Astrocyte of the cerebellum (primary cell): ENCODE measurements at regions of chr12 and their contacts with region 1.

Region 1: DNA sequence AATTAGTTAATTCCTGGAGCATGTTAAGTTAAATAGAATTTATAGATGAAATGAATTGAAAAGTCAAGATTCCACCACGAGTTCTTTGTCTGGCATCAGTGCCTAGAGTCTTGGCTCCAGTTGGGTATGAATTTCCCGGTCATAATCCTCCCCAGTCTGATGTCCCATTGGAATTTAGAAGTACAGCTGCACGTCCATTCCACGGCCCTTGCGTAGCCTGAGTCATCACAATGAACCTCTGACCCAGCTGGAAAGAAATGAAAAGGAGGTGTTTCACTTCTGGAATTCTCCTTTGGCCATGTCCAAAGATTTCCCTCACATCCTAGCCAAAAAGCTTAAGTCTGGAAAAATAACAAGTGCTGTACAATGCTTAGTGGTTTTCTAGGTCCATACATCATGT is 122.7 kb downstream of the KICS2 start:
- DNase-seq: peak; percentile 94
- H3K4me3 ChIP-seq: no peak overlapping the region
- CTCF ChIP-seq: no peak

Region 2: DNA sequence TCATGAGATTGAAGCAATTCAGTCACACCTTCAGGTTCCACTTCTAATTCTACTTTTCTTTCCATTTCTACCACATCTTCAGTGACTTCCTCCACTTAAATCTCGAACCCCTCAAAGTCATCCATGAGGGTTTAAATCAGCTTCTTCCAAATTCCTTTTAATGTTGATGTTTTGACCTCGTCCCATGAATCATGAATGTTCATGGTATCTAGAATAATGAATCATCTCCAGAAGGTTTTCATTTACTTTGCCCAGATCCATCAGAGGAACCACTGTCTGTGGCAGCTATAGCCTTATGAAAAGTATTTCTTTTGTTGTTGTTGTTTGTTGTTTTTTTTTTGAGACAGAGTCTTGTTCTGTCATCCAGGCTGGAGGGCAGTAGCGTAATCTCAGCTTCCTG is 312.1 kb before region 1 on chr12:
- in situ Hi-C with region 1: no loop called
- DNase-seq: no peak
- H3K4me3 ChIP-seq: no peak overlapping the region
- CTCF ChIP-seq: no peak

Region 3: GRCh38 chr12:64137117-64137516 is 37.7 kb after region 1 on chr12:
- in situ Hi-C with region 1: no loop called
- DNase-seq: no peak
- H3K4me3 ChIP-seq: no peak overlapping the region
- CTCF ChIP-seq: no peak

Region 4: GRCh38 chr12:64181504-64182291 is 82.3 kb after region 1 on chr12:
- in situ Hi-C with region 1: loop called (anchors 10 kb)
- DNase-seq: peak; percentile 86
- H3K4me3 ChIP-seq: no peak overlapping the region
- CTCF ChIP-seq: peak; percentile 69

Region 5: DNA sequence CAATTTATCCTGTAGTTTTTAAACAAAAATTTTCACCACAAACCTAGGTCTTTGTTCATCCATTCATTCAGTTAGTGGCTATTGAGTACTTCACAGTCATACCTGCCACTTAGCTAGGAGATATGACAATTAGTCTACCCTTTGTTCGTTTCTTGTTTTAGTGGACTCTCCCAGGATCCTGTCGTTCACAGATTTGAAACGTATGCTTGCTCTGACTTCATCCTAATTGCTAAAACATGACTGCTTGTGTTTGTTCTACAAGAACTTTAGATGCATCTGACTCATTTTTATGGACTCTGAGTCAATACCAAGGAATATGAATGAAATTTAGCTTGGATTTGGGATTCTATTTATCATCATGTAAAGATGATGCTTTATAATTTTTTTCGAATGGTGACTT is 794.6 kb after region 1 on chr12:
- in situ Hi-C with region 1: no loop called
- DNase-seq: no peak
- H3K4me3 ChIP-seq: no peak overlapping the region
- CTCF ChIP-seq: no peak